Ascending aorta (tissue), 2 donors: ENCODE measurements at regions of chr1 and their contacts with region 1.

Region 1: GRCh38 chr1:78101514-78101913 is 55.7 kb downstream of the GIPC2 start:
- DNase-seq: peak in 1 of 2 donors; percentile 90
- H3K4me3 ChIP-seq: no peak overlapping the region
- H3K27ac ChIP-seq: peak overlapping the region; percentile 80 to 81
- H3K4me1 ChIP-seq: peaks cover 0 to 34% of the 10 kb centered on the region in 2 donors
- H3K27me3 ChIP-seq: no peaks in the 10 kb centered on the region
- CTCF ChIP-seq: no peak

Region 2: DNA sequence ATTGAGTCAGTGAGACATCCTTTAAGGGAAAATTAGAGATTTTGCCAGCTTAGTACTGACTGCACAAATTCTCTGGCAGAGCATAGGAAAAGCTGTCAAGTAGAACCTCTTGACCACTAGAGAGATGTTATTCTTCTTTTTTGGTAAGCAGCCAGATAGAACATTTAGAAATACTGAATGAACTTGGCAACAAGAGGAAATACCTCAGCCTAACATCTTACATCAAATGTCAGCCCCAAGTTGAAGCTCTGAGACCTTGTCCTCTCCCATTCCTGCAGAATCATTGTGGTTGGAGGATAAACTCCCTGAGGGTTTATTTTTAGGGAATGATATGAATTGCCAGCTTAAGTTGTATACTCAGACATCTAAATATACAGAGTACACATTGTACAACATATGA is 268.6 kb before region 1 on chr1:
- intact Hi-C with region 1: loop called (anchors 5 kb)
- DNase-seq: no peak
- H3K4me3 ChIP-seq: peak overlapping the region in 1 of 2 donors; percentile 35
- H3K27ac ChIP-seq: peak overlapping the region; percentile 83 to 93
- H3K4me1 ChIP-seq: peaks cover 3 to 55% of the 10 kb centered on the region in 2 donors
- H3K27me3 ChIP-seq: no peaks in the 10 kb centered on the region
- CTCF ChIP-seq: no peak

Region 3: GRCh38 chr1:77978969-77979876 is 122.3 kb before region 1 on chr1 and contains the start of gene FUBP1:
- intact Hi-C with region 1: loop called (anchors 2 kb)
- DNase-seq: peak; percentile 86 to 98
- H3K4me3 ChIP-seq: peak within 1 kb of the TSS; percentile 67 to 86
- H3K27ac ChIP-seq: peak within 1 kb of the TSS; percentile 97 to 98
- H3K4me1 ChIP-seq: peaks cover 0 to 32% of the 10 kb centered on the region in 2 donors
- H3K27me3 ChIP-seq: no peaks in the 10 kb centered on the region
- CTCF ChIP-seq: peak; percentile 84 to 86 (median 86)
- total RNA-seq, gene FUBP1: 90.3 TPM

Region 4: DNA sequence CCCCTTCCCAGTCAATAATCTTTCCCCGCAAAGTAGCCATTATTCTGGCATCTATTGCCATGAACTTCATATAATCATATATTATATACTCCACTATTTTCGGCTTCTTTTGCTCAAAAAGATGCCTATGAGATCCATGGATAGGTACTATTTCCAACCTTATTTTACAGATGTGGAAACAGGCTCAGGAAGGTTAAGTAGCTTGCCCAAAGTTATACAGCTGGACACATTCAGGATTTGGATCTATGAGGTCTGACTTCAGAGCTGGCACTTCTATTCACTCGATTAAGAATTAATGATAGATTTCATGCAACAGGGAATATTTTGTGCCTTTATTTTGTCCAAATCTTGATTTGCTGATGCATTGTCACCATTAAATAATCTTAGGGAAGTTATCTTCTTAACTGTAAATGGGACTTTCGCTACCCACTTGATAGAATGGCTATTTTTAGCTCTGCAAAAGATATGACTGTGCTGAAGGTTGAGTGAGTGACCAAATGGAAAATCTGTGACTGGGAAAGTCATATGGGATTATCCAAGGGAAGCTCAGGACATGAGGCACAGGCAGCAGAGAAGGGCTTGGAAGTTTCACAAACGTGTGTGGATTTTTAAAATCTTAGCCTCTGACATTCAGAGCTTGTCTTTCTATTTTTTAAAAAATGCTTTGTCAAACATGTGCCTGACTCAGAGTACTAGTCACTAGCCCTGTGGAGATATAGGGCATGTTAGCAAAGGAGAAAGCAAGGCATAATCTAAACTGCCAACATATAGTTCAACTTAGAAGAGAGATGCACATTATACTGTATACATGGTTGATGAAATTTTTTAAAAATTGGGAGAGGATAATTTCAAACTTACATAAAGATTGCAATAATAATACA is 19.3 kb before region 1 on chr1:
- intact Hi-C with region 1: loop called (anchors 2 kb)
- DNase-seq: no peak
- H3K4me3 ChIP-seq: no peak overlapping the region
- H3K27ac ChIP-seq: peak overlapping the region; percentile 28 to 49
- H3K4me1 ChIP-seq: peaks cover 0 to 17% of the 10 kb centered on the region in 2 donors
- H3K27me3 ChIP-seq: no peaks in the 10 kb centered on the region
- CTCF ChIP-seq: no peak

Region 5: GRCh38 chr1:78237364-78237916 is 135.9 kb after region 1 on chr1:
- intact Hi-C with region 1: no loop called
- DNase-seq: no peak
- H3K4me3 ChIP-seq: no peak overlapping the region
- H3K27ac ChIP-seq: no peak overlapping the region
- H3K4me1 ChIP-seq: no peaks in the 10 kb centered on the region
- H3K27me3 ChIP-seq: no peaks in the 10 kb centered on the region
- CTCF ChIP-seq: no peak